Activated CD4-positive, alpha-beta T cell treated with anti-CD3 and anti-CD28 coated beads for 36 hours (primary cell): ENCODE measurements at regions of chr3 and their contacts with region 1.

Region 1: DNA sequence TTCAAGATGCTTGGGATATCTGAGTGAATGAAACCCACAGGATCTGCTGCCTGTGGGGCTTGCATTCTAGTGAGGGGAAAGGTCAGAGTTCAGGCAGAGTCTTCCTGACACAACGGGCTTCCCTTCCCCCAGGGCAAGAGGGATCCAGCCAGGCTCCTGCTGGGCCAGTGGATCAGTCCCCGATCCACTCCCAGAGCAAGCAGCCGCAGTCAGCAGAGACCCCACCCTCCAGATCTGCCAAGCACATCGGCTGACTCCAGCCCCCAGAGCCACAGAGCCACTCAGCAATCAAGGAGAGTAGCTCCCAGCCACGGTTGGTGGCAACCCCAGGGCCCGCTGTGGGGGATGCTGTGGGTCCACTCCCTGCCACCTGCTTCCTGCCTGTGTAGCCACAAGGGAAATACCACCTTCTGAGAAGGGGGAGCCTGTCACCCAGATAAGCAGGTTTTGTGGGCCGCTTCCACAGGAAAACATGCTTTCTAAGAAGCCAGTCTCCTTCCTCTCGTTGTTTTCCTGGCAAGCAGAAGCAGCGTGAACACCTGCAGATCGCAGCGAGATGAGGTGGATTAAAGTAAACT is 44.9 kb downstream of the CPN2 start:
- DNase-seq: peak; percentile 67
- ATAC-seq: peak; percentile 37
- H3K4me3 Mint-ChIP-seq: peak overlapping the region; percentile 22
- H3K27ac Mint-ChIP-seq: peak overlapping the region; percentile 82
- H3K4me1 Mint-ChIP-seq: peaks cover 30% of the 10 kb centered on the region
- H3K27me3 Mint-ChIP-seq: peaks cover 2% of the 10 kb centered on the region

Region 2: DNA sequence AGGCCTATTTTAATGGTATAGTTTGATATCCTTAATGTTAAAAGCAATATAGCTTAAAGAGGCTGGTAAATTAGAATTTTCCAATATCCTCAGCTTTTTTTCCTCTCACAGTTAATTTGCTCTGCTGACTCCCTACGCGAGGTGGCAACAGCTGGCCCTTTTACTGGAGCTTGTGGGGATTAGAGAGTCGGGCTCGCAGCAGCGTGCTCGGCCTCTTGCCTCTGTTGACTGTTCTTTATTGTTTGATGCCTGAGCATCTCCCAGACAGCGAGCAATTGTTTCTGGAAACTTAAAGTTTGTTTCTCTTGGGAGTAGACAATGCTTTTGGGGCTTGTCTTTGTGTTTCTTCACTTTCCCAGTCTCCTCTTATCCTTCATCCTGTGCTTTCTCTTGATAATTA is 632.4 kb before region 1 on chr3:
- CTCF ChIA-PET with region 1: no interaction called
- POLR2A ChIA-PET with region 1: no interaction called
- intact Hi-C with region 1: loop called in 1 of 2 experiments (anchors 5 kb)
- DNase-seq: no peak
- ATAC-seq: no peak
- H3K4me3 Mint-ChIP-seq: no peak overlapping the region
- H3K27ac Mint-ChIP-seq: no peak overlapping the region
- H3K4me1 Mint-ChIP-seq: peaks cover 9% of the 10 kb centered on the region
- H3K27me3 Mint-ChIP-seq: no peaks in the 10 kb centered on the region

Region 3: DNA sequence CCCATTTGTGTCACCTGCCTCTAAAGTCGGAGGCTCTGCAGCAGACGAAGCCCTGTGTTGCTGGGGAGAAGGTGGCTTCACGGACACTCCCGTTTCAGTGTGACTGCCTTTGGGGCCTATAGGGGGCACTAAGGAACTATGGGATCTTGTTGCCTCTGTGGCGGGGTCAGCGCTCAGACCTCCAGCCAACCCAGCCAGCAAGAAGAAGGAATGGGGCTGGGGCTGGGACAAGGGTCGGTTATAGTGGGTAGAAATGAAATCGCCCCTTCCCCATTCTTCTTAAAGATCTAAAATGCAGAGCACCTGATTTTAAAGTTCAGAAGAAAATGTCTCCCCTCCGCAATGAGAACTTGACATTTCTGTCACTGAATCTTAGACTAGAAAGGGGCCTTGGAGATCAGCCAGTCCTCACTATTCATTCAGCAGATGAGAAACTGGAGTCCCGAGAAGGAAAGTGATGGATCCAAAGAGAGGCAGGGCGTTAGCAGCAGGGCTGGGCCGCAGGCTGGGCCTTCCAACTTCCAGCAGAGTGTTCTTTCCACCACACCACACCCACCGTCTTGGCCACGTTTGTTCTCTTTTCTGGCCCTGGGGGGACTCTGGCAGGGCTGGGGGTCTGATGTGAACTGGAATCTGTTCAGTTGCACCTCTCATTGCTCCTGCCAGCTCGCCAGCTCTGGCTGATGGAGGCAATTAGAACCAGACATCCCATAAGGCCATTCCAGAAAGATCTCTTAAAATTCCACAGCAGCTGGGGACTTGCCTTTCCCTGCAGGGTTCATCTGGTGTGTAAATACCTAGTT is 517.8 kb before region 1 on chr3:
- CTCF ChIA-PET with region 1: no interaction called
- POLR2A ChIA-PET with region 1: no interaction called
- intact Hi-C with region 1: no loop called
- DNase-seq: peak; percentile 47
- ATAC-seq: peak; percentile 75
- H3K4me3 Mint-ChIP-seq: no peak overlapping the region
- H3K27ac Mint-ChIP-seq: no peak overlapping the region
- H3K4me1 Mint-ChIP-seq: no peaks in the 10 kb centered on the region
- H3K27me3 Mint-ChIP-seq: peaks cover 10% of the 10 kb centered on the region

Region 4: DNA sequence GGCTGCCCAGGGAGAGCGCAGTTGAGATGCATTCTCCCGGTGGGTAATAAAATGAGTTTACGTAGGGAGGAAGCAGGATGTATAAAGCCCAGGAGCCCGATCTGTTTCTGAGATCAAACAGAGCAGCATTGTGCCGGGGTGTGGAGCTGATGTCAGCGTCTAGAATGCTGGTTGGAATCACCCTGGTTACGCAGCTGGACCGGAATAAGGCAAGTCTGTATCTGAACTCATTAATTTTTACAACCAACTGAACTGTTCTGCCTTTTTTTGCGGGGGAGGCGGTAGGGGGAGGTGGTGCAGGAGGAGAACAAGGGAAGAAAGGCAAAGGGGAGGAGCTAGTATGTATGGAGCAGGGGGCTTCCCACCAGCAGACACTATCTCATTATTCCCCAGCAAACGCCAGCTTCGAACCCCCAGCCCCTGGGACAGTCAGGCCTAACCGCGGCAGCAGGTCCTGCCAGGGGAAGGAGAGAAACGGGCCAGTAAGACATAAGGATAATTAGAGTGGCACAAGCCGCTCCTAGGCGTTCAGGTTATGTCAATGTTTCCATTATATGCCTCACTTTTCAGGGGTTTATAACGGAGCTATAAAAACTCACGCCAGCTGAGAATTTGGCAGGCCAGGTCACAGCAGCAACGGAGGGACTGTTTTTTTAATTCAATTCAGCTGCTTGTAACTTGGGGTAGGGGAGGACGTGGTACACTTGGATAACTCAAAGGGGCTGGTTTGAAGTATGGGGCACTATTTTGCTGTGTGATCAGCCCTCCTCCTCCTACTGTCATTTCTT is 345.5 kb before region 1 on chr3:
- CTCF ChIA-PET with region 1: no interaction called
- POLR2A ChIA-PET with region 1: no interaction called
- intact Hi-C with region 1: loop called in 1 of 2 experiments (anchors 5 kb)
- DNase-seq: no peak
- ATAC-seq: no peak
- H3K4me3 Mint-ChIP-seq: no peak overlapping the region
- H3K27ac Mint-ChIP-seq: no peak overlapping the region
- H3K4me1 Mint-ChIP-seq: peaks cover 20% of the 10 kb centered on the region
- H3K27me3 Mint-ChIP-seq: peaks cover 36% of the 10 kb centered on the region

Region 5: GRCh38 chr3:194070634-194071409 is 235.4 kb before region 1 on chr3:
- CTCF ChIA-PET with region 1: no interaction called
- POLR2A ChIA-PET with region 1: no interaction called
- intact Hi-C with region 1: loop called in 1 of 2 experiments (anchors 1 kb)
- DNase-seq: peak; percentile 87
- ATAC-seq: peak; percentile 82
- H3K4me3 Mint-ChIP-seq: peak overlapping the region; percentile 55
- H3K27ac Mint-ChIP-seq: peak overlapping the region; percentile 10
- H3K4me1 Mint-ChIP-seq: peaks cover 24% of the 10 kb centered on the region
- H3K27me3 Mint-ChIP-seq: peaks cover 34% of the 10 kb centered on the region